ENCODE measurements at regions of chr14 and their contacts with region 1.

Region 1: DNA sequence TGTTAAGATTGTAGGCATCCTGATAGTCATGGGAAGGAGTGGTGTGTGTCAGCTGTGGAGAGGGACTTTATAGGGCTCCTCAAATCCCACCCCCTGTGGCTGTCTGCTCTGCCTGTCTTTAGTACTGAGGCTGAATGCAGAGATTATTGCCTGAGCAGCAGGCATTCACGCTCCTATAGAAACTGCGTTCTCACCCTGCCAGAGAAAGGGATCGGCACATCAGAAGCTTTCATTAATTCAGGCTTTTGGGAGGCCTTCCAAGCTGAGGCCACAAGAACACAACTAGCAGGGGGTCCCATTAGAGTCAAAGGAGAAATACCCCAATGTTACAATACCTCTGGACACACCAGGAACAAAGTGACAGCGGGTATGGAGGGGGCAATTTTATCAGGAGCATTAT is 12.6 kb downstream of the KCNK10 start:
- DNase-seq: no peak
- H3K4me3 ChIP-seq: no peak overlapping the region
- H3K27ac ChIP-seq: no peak overlapping the region
- H3K4me1 ChIP-seq: no peaks in the 10 kb centered on the region
- H3K27me3 ChIP-seq: no peaks in the 10 kb centered on the region
- CTCF ChIP-seq: no peak
- EP300 ChIP-seq: no peak
- POLR2A ChIP-seq: no peak

Region 2: DNA sequence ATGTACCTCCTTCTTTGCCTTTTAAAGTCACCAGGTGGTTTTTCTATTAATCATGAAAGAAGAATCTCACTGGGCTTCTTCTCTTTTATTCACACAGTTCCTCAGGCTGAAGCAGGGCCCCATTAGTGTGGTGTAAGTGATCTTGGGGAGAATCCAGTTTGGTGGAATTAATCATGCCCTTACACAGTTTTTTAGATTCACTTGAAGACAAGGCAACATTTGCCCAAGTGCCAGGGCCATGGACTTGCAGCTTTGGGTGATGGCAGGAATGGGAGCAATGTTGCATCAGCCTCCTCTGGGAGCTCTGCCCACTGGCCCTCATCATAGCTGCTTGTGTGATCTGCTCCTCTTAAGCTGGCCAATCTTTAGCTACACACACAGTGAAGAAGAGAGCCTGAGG is 21.2 kb before region 1 on chr14:
- intact Hi-C with region 1: loop called in 1 of 4 experiments (anchors 2 kb)
- DNase-seq: no peak
- H3K4me3 ChIP-seq: no peak overlapping the region
- H3K27ac ChIP-seq: no peak overlapping the region
- H3K4me1 ChIP-seq: no peaks in the 10 kb centered on the region
- H3K27me3 ChIP-seq: no peaks in the 10 kb centered on the region
- CTCF ChIP-seq: no peak
- EP300 ChIP-seq: no peak
- POLR2A ChIP-seq: no peak

Measured in ovary (tissue), 10 donors.